Sigmoid colon (tissue), 7 donors: ENCODE measurements at regions of chr3 and their contacts with region 1.

Region 1: GRCh38 chr3:70090322-70090913 is 90.9 kb downstream of the SAMMSON start:
- DNase-seq: no peak
- H3K4me3 ChIP-seq: peak overlapping the region in 1 of 4 donors; percentile 14
- H3K27ac ChIP-seq: no peak overlapping the region
- H3K4me1 ChIP-seq: peaks cover 0 to 3% (median 0%) of the 10 kb centered on the region in 4 donors
- H3K27me3 ChIP-seq: no peaks in the 10 kb centered on the region
- CTCF ChIP-seq: peak in 3 of 4 experiments; percentile 70 to 71 (median 70)
- EP300 ChIP-seq: no peak
- POLR2A ChIP-seq: no peak

Region 2: DNA sequence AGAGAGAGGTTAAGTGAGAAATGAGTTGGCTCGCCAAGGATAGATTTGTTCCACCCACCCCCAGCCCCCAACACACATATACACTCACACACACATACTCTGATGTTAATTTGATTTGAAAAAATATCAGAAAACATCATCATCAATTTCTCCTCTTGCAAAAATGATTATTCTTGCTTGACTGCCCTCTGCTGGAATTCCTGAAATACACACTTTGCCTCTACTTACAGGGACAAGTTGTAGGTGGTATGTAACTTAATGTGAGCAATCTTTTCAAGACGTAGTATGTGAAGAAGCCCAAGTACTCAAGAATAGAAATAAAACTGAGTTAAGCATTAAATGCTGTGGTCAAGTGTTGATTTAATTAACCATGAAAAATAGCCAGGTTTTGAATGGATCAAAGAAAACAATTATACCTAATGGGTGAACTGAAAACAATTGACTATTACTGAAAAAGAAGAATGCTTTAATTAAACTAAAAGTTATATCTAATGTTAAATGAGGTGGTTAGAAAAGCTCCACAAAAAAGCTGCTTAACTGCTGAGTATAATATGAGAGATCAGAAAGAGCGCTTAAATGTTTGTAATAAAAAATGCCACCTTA is 268.7 kb after region 1 on chr3:
- intact Hi-C with region 1: loop called (anchors 10 kb)
- DNase-seq: no peak
- H3K4me3 ChIP-seq: no peak overlapping the region
- H3K27ac ChIP-seq: no peak overlapping the region
- H3K4me1 ChIP-seq: no peaks in the 10 kb centered on the region
- H3K27me3 ChIP-seq: no peaks in the 10 kb centered on the region
- CTCF ChIP-seq: peak in 3 of 4 experiments; percentile 44 to 58 (median 56)
- EP300 ChIP-seq: no peak
- POLR2A ChIP-seq: no peak

Region 3: GRCh38 chr3:70501561-70501960 is 411.1 kb after region 1 on chr3:
- intact Hi-C with region 1: loop called (anchors 10 kb)
- DNase-seq: no peak
- H3K4me3 ChIP-seq: no peak overlapping the region
- H3K27ac ChIP-seq: no peak overlapping the region
- H3K4me1 ChIP-seq: peaks cover 0 to 16% (median 13%) of the 10 kb centered on the region in 4 donors
- H3K27me3 ChIP-seq: no peaks in the 10 kb centered on the region
- CTCF ChIP-seq: no peak
- EP300 ChIP-seq: no peak
- POLR2A ChIP-seq: no peak

Region 4: GRCh38 chr3:70840106-70840875 is 749.9 kb after region 1 on chr3:
- intact Hi-C with region 1: no loop called
- DNase-seq: no peak
- H3K4me3 ChIP-seq: no peak overlapping the region
- H3K27ac ChIP-seq: no peak overlapping the region
- H3K4me1 ChIP-seq: no peaks in the 10 kb centered on the region
- H3K27me3 ChIP-seq: no peaks in the 10 kb centered on the region
- CTCF ChIP-seq: no peak
- EP300 ChIP-seq: no peak
- POLR2A ChIP-seq: no peak